ENCODE measurements at regions of chr2 and their contacts with region 1.

Region 1: GRCh38 chr2:170895023-170895757 is 33.9 kb upstream of the GORASP2 start:
- DNase-seq: no peak
- H3K4me3 ChIP-seq: no peak overlapping the region
- H3K27ac ChIP-seq: peak overlapping the region; percentile 9 to 43
- H3K4me1 ChIP-seq: peaks cover 5 to 7% of the 10 kb centered on the region in 2 donors
- H3K27me3 ChIP-seq: no peaks in the 10 kb centered on the region
- CTCF ChIP-seq: no peak
- POLR2A ChIP-seq: no peak

Region 2: GRCh38 chr2:170554278-170554955 is 340.8 kb before region 1 on chr2:
- intact Hi-C with region 1: no loop called
- DNase-seq: peak in 1 of 2 donors; percentile 28
- H3K4me3 ChIP-seq: no peak overlapping the region
- H3K27ac ChIP-seq: peak overlapping the region in 1 of 2 donors; percentile 35
- H3K4me1 ChIP-seq: no peaks in the 10 kb centered on the region
- H3K27me3 ChIP-seq: no peaks in the 10 kb centered on the region
- CTCF ChIP-seq: no peak
- POLR2A ChIP-seq: no peak

Region 3: GRCh38 chr2:170950221-170950761 is 55.1 kb after region 1 on chr2:
- intact Hi-C with region 1: no loop called
- DNase-seq: no peak
- H3K4me3 ChIP-seq: no peak overlapping the region
- H3K27ac ChIP-seq: no peak overlapping the region
- H3K4me1 ChIP-seq: no peaks in the 10 kb centered on the region
- H3K27me3 ChIP-seq: no peaks in the 10 kb centered on the region
- CTCF ChIP-seq: no peak
- POLR2A ChIP-seq: no peak

Region 4: GRCh38 chr2:171922230-171923022 is 1027.2 kb after region 1 on chr2 and contains the start of gene HAT1:
- intact Hi-C with region 1: loop called (anchors 5 kb)
- DNase-seq: peak; percentile 96 to 98
- H3K4me3 ChIP-seq: peak within 1 kb of the TSS; percentile 65 to 78 (median 77)
- H3K27ac ChIP-seq: peak within 1 kb of the TSS; percentile 96 to 99
- H3K4me1 ChIP-seq: peaks cover 0 to 11% of the 10 kb centered on the region in 2 donors
- H3K27me3 ChIP-seq: no peaks in the 10 kb centered on the region
- CTCF ChIP-seq: no peak
- POLR2A ChIP-seq: no peak
- total RNA-seq, gene HAT1: 24.0 to 53.4 (median 35.4) TPM

Measured in breast epithelium (tissue), 4 donors.